Activated T-helper 1 cell treated with anti-CD3 and anti-CD28 coated beads, Interleukin-12 subunit alpha, Interleukin-12 subunit beta, Interleukin-2, Interleukin-4 antibody, amounts not matched to agents 30 ng/mL and 10 ng/mL and 1 ng/mL, durations not matched to agents 14 hours and 24 hours and 36 hours (primary cell): ENCODE measurements at regions of chr1 and their contacts with region 1.

Region 1: GRCh38 chr1:23691499-23692307 is at the start of gene RPL11:
- DNase-seq: peak; percentile 82
- H3K4me3 Mint-ChIP-seq: peak within 1 kb of the TSS; percentile 97
- H3K27ac Mint-ChIP-seq: peak within 1 kb of the TSS; percentile 90
- H3K4me1 Mint-ChIP-seq: peaks cover 45% of the 10 kb centered on the region
- H3K27me3 Mint-ChIP-seq: no peaks in the 10 kb centered on the region
- total RNA-seq, gene RPL11: 1,058 and 1,119 TPM in 2 replicates

Region 2: GRCh38 chr1:23664837-23665795 is 26.6 kb before region 1 on chr1:
- intact Hi-C with region 1: no loop called
- DNase-seq: no peak
- H3K4me3 Mint-ChIP-seq: no peak overlapping the region
- H3K27ac Mint-ChIP-seq: no peak overlapping the region
- H3K4me1 Mint-ChIP-seq: peaks cover 12% of the 10 kb centered on the region
- H3K27me3 Mint-ChIP-seq: peaks cover 4% of the 10 kb centered on the region

Region 3: GRCh38 chr1:23709229-23709628 is 17.5 kb after region 1 on chr1:
- intact Hi-C with region 1: no loop called
- DNase-seq: no peak
- H3K4me3 Mint-ChIP-seq: no peak overlapping the region
- H3K27ac Mint-ChIP-seq: peak overlapping the region; percentile 5
- H3K4me1 Mint-ChIP-seq: peaks cover 10% of the 10 kb centered on the region
- H3K27me3 Mint-ChIP-seq: no peaks in the 10 kb centered on the region

Region 4: DNA sequence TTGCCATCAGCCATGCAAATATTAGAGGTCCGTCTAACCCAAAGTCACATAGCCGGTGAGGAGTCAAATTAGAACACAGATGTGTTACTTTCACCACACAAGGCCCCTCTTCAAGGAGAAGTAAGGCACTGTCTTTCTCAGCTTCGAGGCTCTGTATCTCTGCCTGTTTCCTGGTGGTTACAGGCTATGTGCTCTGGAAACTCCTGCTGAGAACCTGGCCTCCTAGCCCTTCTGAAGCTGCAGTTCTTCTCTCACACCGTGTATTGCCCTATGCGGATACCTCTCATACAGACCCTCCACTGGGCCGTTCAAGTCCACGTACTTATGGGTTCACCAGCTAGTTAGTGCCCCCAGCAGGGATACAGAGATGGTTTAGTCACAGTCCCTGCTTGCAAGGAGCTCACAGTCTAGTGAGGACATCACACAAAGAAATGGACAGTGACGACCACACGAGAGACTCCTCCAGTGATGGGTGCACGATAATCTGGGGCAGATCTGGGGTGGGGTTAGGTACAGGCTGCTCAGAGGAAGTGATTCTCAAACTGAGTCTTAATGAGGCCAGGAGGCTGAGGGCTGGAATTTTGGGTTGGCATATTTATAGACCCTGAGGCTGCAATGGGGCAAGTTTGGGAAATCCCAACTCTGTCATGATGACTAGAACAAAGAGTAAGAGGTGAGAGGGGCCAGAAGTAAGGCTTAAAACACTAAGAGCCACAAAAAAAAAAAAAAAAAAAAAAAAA is 28.7 kb after region 1 on chr1:
- intact Hi-C with region 1: loop called (anchors 2 kb)
- DNase-seq: peak; percentile 8
- H3K4me3 Mint-ChIP-seq: peak overlapping the region; percentile 5
- H3K27ac Mint-ChIP-seq: peak overlapping the region; percentile 67
- H3K4me1 Mint-ChIP-seq: peaks cover 32% of the 10 kb centered on the region
- H3K27me3 Mint-ChIP-seq: no peaks in the 10 kb centered on the region

Region 5: GRCh38 chr1:23751050-23751814 is 59.5 kb after region 1 on chr1:
- intact Hi-C with region 1: loop called (anchors 1 kb)
- DNase-seq: peak; percentile 22
- H3K4me3 Mint-ChIP-seq: no peak overlapping the region
- H3K27ac Mint-ChIP-seq: no peak overlapping the region
- H3K4me1 Mint-ChIP-seq: peaks cover 34% of the 10 kb centered on the region
- H3K27me3 Mint-ChIP-seq: no peaks in the 10 kb centered on the region

Region 6: DNA sequence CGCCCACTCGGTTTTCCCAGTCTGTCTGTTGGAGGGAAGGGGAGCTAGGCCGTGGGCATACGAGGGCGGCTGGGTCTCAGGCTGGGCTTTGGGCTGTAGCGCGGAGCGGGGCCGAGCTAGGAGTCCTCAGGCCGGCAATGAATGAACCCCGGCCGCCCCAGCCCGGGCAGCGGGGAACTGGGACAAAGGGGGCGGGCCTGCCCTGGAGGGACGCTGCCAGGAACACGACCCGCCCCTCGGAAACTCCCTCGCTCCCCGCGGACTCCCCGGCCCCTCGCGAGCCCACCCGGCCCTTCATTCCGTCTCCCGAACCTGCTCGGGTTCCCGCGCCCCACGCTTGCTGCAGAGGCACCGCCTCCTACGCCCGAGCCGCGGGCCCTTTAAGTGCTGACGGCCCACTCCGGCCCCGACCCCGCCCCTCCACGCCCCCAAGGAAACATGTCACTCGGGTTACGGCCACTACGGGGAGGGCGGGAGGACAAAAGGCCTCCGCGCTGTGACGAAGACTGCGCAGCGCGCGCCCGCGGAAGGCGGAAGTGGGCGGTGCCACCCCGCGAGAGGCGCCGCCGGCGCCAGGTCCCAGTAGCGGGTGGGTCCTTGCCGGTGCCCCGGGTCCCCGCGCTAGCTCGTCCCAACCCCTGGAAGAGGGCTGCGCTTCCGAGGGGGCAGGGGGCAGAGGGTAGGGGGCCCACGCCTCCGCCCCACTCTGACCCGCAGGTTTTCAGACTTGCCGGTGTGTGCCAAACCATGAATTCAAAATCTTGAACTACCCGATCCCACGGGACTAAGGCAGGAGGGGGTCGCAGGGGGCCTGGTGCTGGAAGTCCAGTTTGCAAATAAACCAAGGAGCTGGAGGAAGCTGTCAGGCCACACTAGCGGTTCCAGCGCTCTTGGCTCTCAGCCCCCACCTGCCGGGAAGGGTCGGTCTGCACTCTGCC is 109.0 kb after region 1 on chr1 and contains the start of gene GALE:
- intact Hi-C with region 1: loop called (anchors 1 kb)
- DNase-seq: peak; percentile 93
- H3K4me3 Mint-ChIP-seq: peak within 1 kb of the TSS; percentile 97
- H3K27ac Mint-ChIP-seq: peak within 1 kb of the TSS; percentile 88
- H3K4me1 Mint-ChIP-seq: peaks cover 13% of the 10 kb centered on the region
- H3K27me3 Mint-ChIP-seq: peaks cover 2% of the 10 kb centered on the region
- total RNA-seq, gene GALE: 62.4 and 63.4 TPM in 2 replicates

Region 7: GRCh38 chr1:23845163-23845562 is 153.5 kb after region 1 on chr1:
- intact Hi-C with region 1: no loop called
- DNase-seq: no peak
- H3K4me3 Mint-ChIP-seq: no peak overlapping the region
- H3K27ac Mint-ChIP-seq: no peak overlapping the region
- H3K4me1 Mint-ChIP-seq: no peaks in the 10 kb centered on the region
- H3K27me3 Mint-ChIP-seq: peaks cover 6% of the 10 kb centered on the region

Region 8: GRCh38 chr1:23979878-23980724 is 288.4 kb after region 1 on chr1 and contains the start of gene SRSF10:
- intact Hi-C with region 1: loop called (anchors 5 kb)
- DNase-seq: peak; percentile 98
- H3K4me3 Mint-ChIP-seq: peak within 1 kb of the TSS; percentile 97
- H3K27ac Mint-ChIP-seq: peak within 1 kb of the TSS; percentile 97
- H3K4me1 Mint-ChIP-seq: peaks cover 47% of the 10 kb centered on the region
- H3K27me3 Mint-ChIP-seq: no peaks in the 10 kb centered on the region
- total RNA-seq, gene SRSF10: 238 and 243 TPM in 2 replicates